Ovary (tissue), 10 donors: ENCODE measurements at regions of chr17 and their contacts with region 1.

Region 1: DNA sequence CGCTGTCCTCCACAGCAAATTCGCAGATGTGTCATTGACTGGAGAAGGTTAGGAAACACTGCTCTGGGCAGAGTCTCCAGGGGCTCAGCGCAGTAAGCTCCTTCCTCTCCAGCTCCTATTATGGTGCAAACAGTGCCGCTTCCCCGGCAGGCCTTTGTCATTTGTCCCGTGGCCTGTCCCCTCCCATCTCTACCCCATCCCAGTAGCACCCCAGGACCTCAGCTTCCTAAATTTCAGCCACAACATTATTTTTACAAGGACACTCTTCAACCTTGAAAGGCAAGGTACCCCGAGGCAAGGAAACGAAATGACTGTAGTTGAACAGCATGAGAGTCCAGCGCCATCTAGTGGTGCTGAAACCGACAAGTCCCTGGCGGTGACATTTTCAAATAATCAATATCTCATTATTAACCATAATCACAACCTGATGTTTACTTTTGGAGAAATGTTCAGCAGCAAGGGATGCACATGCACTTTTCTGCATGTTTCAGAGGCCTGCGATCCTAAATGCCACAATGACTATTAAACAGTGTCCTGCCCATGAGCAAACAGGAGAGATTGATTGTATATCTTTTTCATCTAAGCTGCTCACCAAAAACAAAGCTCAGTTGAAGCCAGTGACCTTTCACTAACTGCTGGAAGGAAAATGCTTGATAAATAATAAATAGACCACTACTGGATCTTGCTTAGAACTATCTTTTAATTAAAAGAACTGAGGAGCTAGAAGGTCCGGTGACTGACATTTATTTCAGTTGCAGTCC is 16.5 kb downstream of the MRPS23 start:
- DNase-seq: peak; percentile 64 to 76 (median 68)
- H3K4me3 ChIP-seq: peak overlapping the region; percentile 33
- H3K27ac ChIP-seq: peak overlapping the region in 1 of 2 donors; percentile 38
- H3K4me1 ChIP-seq: no peaks in the 10 kb centered on the region
- H3K27me3 ChIP-seq: no peaks in the 10 kb centered on the region
- CTCF ChIP-seq: peak; percentile 79 to 90 (median 83)
- EP300 ChIP-seq: no peak
- POLR2A ChIP-seq: no peak

Region 2: DNA sequence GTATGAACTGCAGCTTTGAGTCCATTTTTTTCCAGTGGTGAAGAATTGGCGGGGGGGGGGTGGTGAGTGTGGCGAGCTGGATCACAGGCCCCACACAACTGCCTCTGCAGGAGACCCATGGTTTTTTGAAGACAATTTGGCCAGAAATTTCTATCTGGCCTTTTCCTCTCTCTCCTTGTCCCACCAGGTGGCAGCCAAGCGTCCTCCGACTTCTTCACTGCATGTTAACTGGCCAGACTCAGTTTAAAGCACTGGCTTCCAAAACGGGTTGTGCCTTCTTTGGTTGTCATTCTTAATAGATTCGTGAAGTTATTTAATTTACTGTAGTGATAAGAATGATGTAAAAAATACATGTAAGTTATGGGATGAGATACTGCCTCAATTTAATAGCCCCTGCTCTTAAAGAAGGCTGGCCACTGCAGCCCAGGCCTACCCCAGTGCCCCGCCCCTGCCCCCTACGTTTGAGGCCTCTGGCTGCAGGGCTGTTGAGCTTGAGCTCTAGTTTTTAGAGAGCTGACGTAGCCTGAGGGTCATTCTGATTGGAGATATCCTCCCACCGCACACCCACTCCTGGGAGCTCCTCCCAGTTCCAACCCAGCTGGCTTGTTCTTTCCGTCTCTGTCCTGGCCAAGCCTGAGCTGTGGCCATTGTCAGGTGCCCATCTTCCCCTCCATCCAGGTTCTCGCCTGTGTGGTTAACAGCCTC is 711.9 kb before region 1 on chr17:
- intact Hi-C with region 1: loop called in 3 of 4 experiments (anchors 5 kb)
- DNase-seq: peak; percentile 46 to 67 (median 60)
- H3K4me3 ChIP-seq: no peak overlapping the region
- H3K27ac ChIP-seq: no peak overlapping the region
- H3K4me1 ChIP-seq: no peaks in the 10 kb centered on the region
- H3K27me3 ChIP-seq: no peaks in the 10 kb centered on the region
- CTCF ChIP-seq: peak in 1 of 3 donors; percentile 36
- EP300 ChIP-seq: no peak
- POLR2A ChIP-seq: no peak

Region 3: GRCh38 chr17:57130761-57131461 is 702.4 kb before region 1 on chr17:
- intact Hi-C with region 1: loop called in 3 of 4 experiments (anchors 5 to 10 kb)
- DNase-seq: peak; percentile 83 to 92 (median 88)
- H3K4me3 ChIP-seq: no peak overlapping the region
- H3K27ac ChIP-seq: no peak overlapping the region
- H3K4me1 ChIP-seq: no peaks in the 10 kb centered on the region
- H3K27me3 ChIP-seq: no peaks in the 10 kb centered on the region
- CTCF ChIP-seq: peak; percentile 54 to 90 (median 75)
- EP300 ChIP-seq: no peak
- POLR2A ChIP-seq: no peak

Region 4: DNA sequence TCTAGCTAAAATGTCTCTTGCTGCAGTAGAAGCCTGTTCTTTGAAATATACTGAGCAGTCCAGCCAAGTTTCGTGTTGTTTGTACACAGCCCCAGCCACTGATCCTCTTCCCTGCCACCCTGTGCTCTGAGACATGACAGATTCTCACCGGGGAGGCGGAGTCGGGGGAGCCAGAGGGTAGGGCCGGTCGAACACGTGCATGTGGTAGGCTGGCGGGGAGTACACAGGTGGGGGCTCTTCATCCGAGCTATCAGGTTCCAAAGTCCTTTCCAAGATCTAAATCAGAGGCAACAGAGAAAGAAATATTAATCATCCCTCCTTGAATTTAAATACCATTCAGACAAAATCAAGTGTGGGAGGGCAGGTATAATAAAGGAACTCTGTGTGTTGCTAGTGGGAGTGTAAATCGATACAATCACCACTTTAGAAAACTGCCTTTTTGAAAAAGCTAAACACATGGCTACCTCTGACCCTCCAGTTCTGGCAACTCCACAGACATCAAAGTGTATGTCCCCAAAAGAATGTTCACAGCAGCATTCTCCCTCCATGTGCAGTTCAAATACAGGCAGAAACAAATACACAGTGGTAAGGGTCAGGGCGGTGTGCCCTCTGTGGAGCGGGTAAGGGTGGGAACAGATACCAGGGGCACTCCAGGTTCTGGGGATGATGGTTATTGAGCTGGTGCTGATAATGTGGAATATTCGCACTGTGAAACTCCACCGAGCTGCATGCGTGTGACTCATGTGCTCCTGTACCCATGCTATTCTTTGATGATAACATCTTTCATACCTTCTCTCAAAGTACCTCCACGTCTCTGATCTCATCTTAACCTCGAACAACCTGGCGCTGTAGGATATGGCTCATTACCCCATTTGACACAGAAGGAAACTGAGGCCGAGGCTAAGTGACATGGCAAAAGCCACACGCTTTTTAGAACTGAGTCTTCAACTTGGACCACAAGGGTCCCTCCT is 46.4 kb after region 1 on chr17:
- intact Hi-C with region 1: no loop called
- DNase-seq: no peak
- H3K4me3 ChIP-seq: no peak overlapping the region
- H3K27ac ChIP-seq: no peak overlapping the region
- H3K4me1 ChIP-seq: peaks cover 25% of the 10 kb centered on the region
- H3K27me3 ChIP-seq: no peaks in the 10 kb centered on the region
- CTCF ChIP-seq: no peak
- EP300 ChIP-seq: no peak
- POLR2A ChIP-seq: no peak